PC-3 (cell line): ENCODE measurements at regions of chr3 and their contacts with region 1.

Region 1: GRCh38 chr3:32106280-32106928 is at the start of gene GPD1L:
- DNase-seq: peak; percentile 98
- ATAC-seq: peak; percentile 90
- H3K4me3 ChIP-seq: peak within 1 kb of the TSS; percentile 93
- H3K27ac ChIP-seq: peak within 1 kb of the TSS; percentile 86
- H3K4me1 ChIP-seq: peaks cover 51% of the 10 kb centered on the region
- H3K27me3 ChIP-seq: no peaks in the 10 kb centered on the region
- CTCF ChIP-seq: no peak
- total RNA-seq, gene GPD1L: 33.7 and 42.8 TPM in 2 replicates

Region 2: GRCh38 chr3:31960793-31961431 is 145.5 kb before region 1 on chr3:
- CTCF ChIA-PET with region 1: no interaction called
- POLR2A ChIA-PET with region 1: interaction called, 33 read pairs
- intact Hi-C with region 1: no loop called
- DNase-seq: peak; percentile 84
- ATAC-seq: peak; percentile 64
- H3K4me3 ChIP-seq: no peak overlapping the region
- H3K27ac ChIP-seq: peak overlapping the region; percentile 9
- H3K4me1 ChIP-seq: peaks cover 47% of the 10 kb centered on the region
- H3K27me3 ChIP-seq: no peaks in the 10 kb centered on the region
- CTCF ChIP-seq: no peak